ENCODE measurements at regions of chr16 and their contacts with region 1.

Region 1: DNA sequence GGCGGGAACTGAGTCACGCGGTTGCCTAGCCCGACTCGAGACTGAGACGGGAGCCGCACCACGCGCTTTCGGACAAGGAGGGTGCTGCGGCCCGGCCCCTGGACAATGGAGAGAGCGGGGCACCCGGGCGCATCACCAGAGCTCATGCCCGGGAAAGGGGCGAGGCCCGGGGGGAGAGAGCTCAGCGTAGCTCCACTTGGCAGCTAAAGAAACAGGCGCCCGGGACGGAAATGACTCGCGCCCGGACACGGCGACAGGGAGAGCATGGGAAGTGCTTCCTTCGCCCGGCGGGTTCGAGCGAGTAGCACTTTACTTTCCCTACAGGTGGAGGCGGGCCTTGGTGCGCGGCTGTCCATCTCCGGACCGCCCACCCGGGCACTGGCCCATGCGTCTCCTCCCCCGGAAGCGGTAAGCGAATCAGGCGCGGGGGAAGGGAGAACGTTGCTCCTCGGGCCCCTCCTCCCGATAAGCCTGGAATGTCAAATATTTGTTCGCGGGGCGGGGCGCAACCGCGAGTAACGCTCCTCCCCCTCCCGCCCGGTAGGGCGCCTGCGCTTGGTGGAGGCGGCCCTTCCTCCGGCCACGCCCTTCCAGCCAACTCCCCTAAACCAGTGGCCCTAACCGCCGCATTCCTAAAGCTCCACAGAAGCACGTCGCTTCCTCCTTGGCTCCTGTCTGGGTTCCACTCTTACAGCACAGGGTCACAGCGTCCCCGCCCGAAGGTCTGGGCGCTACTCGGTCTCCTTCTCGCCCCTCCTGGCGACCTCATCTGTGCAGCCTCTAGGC is 1.5 kb upstream of the ESRP2 start:
- DNase-seq: peak; percentile 96 to 99 (median 99)
- ATAC-seq: peak; percentile 61 to 81 (median 71)
- H3K4me3 ChIP-seq: peak overlapping the region; percentile 34 to 86 (median 74)
- H3K27ac ChIP-seq: peak overlapping the region; percentile 83 to 99 (median 95)
- H3K4me1 ChIP-seq: peaks cover 8 to 26% (median 10%) of the 10 kb centered on the region in 3 donors
- H3K27me3 ChIP-seq: no peaks in the 10 kb centered on the region
- CTCF ChIP-seq: no peak

Region 2: GRCh38 chr16:67979955-67980678 is 257.3 kb before region 1 on chr16 and contains the start of gene DPEP3:
- intact Hi-C with region 1: loop called in 1 of 3 experiments (anchors 10 kb)
- DNase-seq: no peak
- ATAC-seq: no peak
- H3K4me3 ChIP-seq: no peak within 1 kb of the TSS
- H3K27ac ChIP-seq: no peak within 1 kb of the TSS
- H3K4me1 ChIP-seq: peaks cover 0 to 4% (median 0%) of the 10 kb centered on the region in 3 donors
- H3K27me3 ChIP-seq: no peaks in the 10 kb centered on the region
- CTCF ChIP-seq: no peak
- total RNA-seq, gene DPEP3: 0.09 to 0.12 TPM in 2 of 6 donors, not detected in the others

Region 3: DNA sequence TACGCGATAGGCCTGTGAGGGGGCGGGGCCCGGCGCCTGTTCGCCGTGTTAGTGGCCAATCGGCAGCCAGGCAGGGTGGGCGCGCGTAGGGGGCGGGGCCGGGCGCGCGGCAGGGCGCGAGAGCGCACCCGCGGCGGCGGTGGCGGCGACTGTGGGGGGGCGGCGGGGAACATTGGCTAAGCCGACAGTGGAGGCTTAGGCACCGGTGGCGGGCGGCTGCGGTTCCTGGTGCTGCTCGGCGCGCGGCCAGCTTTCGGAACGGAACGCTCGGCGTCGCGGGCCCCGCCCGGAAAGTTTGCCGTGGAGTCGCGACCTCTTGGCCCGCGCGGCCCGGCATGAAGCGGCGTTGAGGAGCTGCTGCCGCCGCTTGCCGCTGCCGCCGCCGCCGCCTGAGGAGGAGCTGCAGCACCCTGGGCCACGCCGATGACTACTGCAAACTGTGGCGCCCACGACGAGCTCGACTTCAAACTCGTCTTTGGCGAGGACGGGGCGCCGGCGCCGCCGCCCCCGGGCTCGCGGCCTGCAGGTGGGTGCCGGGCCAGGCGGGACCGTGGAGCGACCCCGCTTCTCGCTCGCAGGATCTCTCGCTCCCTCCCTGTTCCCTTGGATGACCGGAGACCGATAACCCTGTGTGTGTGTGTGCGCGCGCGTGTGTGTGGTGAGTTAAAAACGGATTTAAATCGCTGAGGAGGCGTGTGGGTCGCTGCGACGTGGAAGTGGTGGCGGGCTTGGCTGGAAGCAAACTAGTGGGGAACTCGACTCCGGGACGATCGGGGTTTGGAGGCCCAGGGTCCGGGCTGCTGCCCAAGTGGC is 152.0 kb before region 1 on chr16 and contains the start of gene NFATC3:
- intact Hi-C with region 1: loop called in 1 of 3 experiments (anchors 10 kb)
- DNase-seq: peak; percentile 98 to 99 (median 99)
- ATAC-seq: peak; percentile 89 to 95 (median 94)
- H3K4me3 ChIP-seq: peak within 1 kb of the TSS; percentile 73 to 89 (median 81)
- H3K27ac ChIP-seq: peak within 1 kb of the TSS; percentile 84 to 93 (median 90)
- H3K4me1 ChIP-seq: peaks cover 13 to 31% (median 27%) of the 10 kb centered on the region in 3 donors
- H3K27me3 ChIP-seq: no peaks in the 10 kb centered on the region
- CTCF ChIP-seq: no peak
- total RNA-seq, gene NFATC3: 9.5 to 19.3 (median 13.5) TPM

Region 4: GRCh38 chr16:68289621-68290329 is 52.3 kb after region 1 on chr16:
- intact Hi-C with region 1: loop called in 1 of 3 experiments (anchors 5 kb)
- DNase-seq: no peak
- ATAC-seq: peak in 1 of 4 donors; percentile 34
- H3K4me3 ChIP-seq: no peak overlapping the region
- H3K27ac ChIP-seq: no peak overlapping the region
- H3K4me1 ChIP-seq: no peaks in the 10 kb centered on the region
- H3K27me3 ChIP-seq: no peaks in the 10 kb centered on the region
- CTCF ChIP-seq: no peak

Region 5: GRCh38 chr16:68367030-68367429 is 129.6 kb after region 1 on chr16:
- intact Hi-C with region 1: no loop called
- DNase-seq: peak in 4 of 6 donors; percentile 24 to 36 (median 34)
- ATAC-seq: peak in 3 of 4 donors; percentile 35 to 51 (median 50)
- H3K4me3 ChIP-seq: no peak overlapping the region
- H3K27ac ChIP-seq: no peak overlapping the region
- H3K4me1 ChIP-seq: no peaks in the 10 kb centered on the region
- H3K27me3 ChIP-seq: no peaks in the 10 kb centered on the region
- CTCF ChIP-seq: peak in 1 of 4 donors; percentile 28

Region 6: GRCh38 chr16:68478526-68479250 is 241.3 kb after region 1 on chr16:
- intact Hi-C with region 1: no loop called
- DNase-seq: no peak
- ATAC-seq: peak in 1 of 4 donors; percentile 67
- H3K4me3 ChIP-seq: no peak overlapping the region
- H3K27ac ChIP-seq: no peak overlapping the region
- H3K4me1 ChIP-seq: no peaks in the 10 kb centered on the region
- H3K27me3 ChIP-seq: no peaks in the 10 kb centered on the region
- CTCF ChIP-seq: no peak